ENCODE measurements at regions of chr3 and their contacts with region 1.

Region 1: GRCh38 chr3:197599089-197599765 is 43.5 kb upstream of the BDH1 start:
- DNase-seq: peak; percentile 76 to 81 (median 79)
- H3K4me3 ChIP-seq: no peak overlapping the region
- H3K4me3 Mint-ChIP-seq: no peak overlapping the region
- H3K27ac ChIP-seq: no peak overlapping the region
- H3K27ac Mint-ChIP-seq: peak overlapping the region in 4 of 7 donors; percentile 47 to 78 (median 62)
- H3K4me1 ChIP-seq: no peaks in the 10 kb centered on the region
- H3K4me1 Mint-ChIP-seq: peaks cover 5 to 6% (median 5%) of the 10 kb centered on the region in 4 donors
- H3K27me3 ChIP-seq: no peaks in the 10 kb centered on the region
- H3K27me3 Mint-ChIP-seq: no peaks in the 10 kb centered on the region

Region 2: GRCh38 chr3:195909644-195910508 is 1689.4 kb before region 1 on chr3:
- CTCF ChIA-PET with region 1: no interaction called
- POLR2A ChIA-PET with region 1: no interaction called
- intact Hi-C with region 1: no loop called
- DNase-seq: peak; percentile 86 to 88 (median 87)
- H3K4me3 ChIP-seq: peak overlapping the region; percentile 42 to 47
- H3K4me3 Mint-ChIP-seq: peak overlapping the region; percentile 57 to 79 (median 65)
- H3K27ac ChIP-seq: peak overlapping the region; percentile 58
- H3K27ac Mint-ChIP-seq: peak overlapping the region in 6 of 7 donors; percentile 46 to 88 (median 76)
- H3K4me1 ChIP-seq: peaks cover 43% of the 10 kb centered on the region
- H3K4me1 Mint-ChIP-seq: peaks cover 22 to 46% (median 33%) of the 10 kb centered on the region in 4 donors
- H3K27me3 ChIP-seq: no peaks in the 10 kb centered on the region
- H3K27me3 Mint-ChIP-seq: no peaks in the 10 kb centered on the region

Region 3: GRCh38 chr3:197125636-197126035 is 473.6 kb before region 1 on chr3:
- CTCF ChIA-PET with region 1: no interaction called
- POLR2A ChIA-PET with region 1: no interaction called
- intact Hi-C with region 1: no loop called
- DNase-seq: no peak
- H3K4me3 ChIP-seq: no peak overlapping the region
- H3K4me3 Mint-ChIP-seq: no peak overlapping the region
- H3K27ac ChIP-seq: no peak overlapping the region
- H3K27ac Mint-ChIP-seq: peak overlapping the region in 1 of 7 donors; percentile 8
- H3K4me1 ChIP-seq: no peaks in the 10 kb centered on the region
- H3K4me1 Mint-ChIP-seq: peaks cover 0 to 6% (median under 1%) of the 10 kb centered on the region in 4 donors
- H3K27me3 ChIP-seq: no peaks in the 10 kb centered on the region
- H3K27me3 Mint-ChIP-seq: no peaks in the 10 kb centered on the region

Region 4: GRCh38 chr3:197613199-197613598 is 14.0 kb after region 1 on chr3:
- CTCF ChIA-PET with region 1: interaction called, 64 read pairs
- POLR2A ChIA-PET with region 1: interaction called, 3 read pairs
- intact Hi-C with region 1: no loop called
- DNase-seq: peak; percentile 72 to 83 (median 78)
- H3K4me3 ChIP-seq: no peak overlapping the region
- H3K4me3 Mint-ChIP-seq: peak overlapping the region; percentile 22 to 82 (median 52)
- H3K27ac ChIP-seq: peak overlapping the region; percentile 53
- H3K27ac Mint-ChIP-seq: peak overlapping the region; percentile 74 to 98 (median 94)
- H3K4me1 ChIP-seq: peaks cover 23% of the 10 kb centered on the region
- H3K4me1 Mint-ChIP-seq: peaks cover 13 to 37% (median 22%) of the 10 kb centered on the region in 4 donors
- H3K27me3 ChIP-seq: no peaks in the 10 kb centered on the region
- H3K27me3 Mint-ChIP-seq: no peaks in the 10 kb centered on the region

Region 5: GRCh38 chr3:197673170-197673569 is 73.9 kb after region 1 on chr3:
- CTCF ChIA-PET with region 1: interaction called, 10 read pairs
- POLR2A ChIA-PET with region 1: interaction called, 3 read pairs
- intact Hi-C with region 1: no loop called
- DNase-seq: no peak
- H3K4me3 ChIP-seq: no peak overlapping the region
- H3K4me3 Mint-ChIP-seq: no peak overlapping the region
- H3K27ac ChIP-seq: no peak overlapping the region
- H3K27ac Mint-ChIP-seq: peak overlapping the region in 4 of 7 donors; percentile 30 to 64 (median 53)
- H3K4me1 ChIP-seq: no peaks in the 10 kb centered on the region
- H3K4me1 Mint-ChIP-seq: peaks cover 0 to 5% (median 2%) of the 10 kb centered on the region in 4 donors
- H3K27me3 ChIP-seq: no peaks in the 10 kb centered on the region
- H3K27me3 Mint-ChIP-seq: no peaks in the 10 kb centered on the region

Region 6: GRCh38 chr3:197801891-197802778 is 202.9 kb after region 1 on chr3:
- CTCF ChIA-PET with region 1: no interaction called
- POLR2A ChIA-PET with region 1: no interaction called
- intact Hi-C with region 1: loop called (anchors 5 kb)
- DNase-seq: peak; percentile 20 to 48 (median 36)
- H3K4me3 ChIP-seq: no peak overlapping the region
- H3K4me3 Mint-ChIP-seq: peak overlapping the region in 5 of 8 donors; percentile 3 to 56 (median 24)
- H3K27ac ChIP-seq: no peak overlapping the region
- H3K27ac Mint-ChIP-seq: peak overlapping the region; percentile 74 to 84 (median 77)
- H3K4me1 ChIP-seq: peaks cover 44% of the 10 kb centered on the region
- H3K4me1 Mint-ChIP-seq: peaks cover 34 to 58% (median 43%) of the 10 kb centered on the region in 4 donors
- H3K27me3 ChIP-seq: no peaks in the 10 kb centered on the region
- H3K27me3 Mint-ChIP-seq: no peaks in the 10 kb centered on the region